Sigmoid colon (tissue), 7 donors: ENCODE measurements at regions of chr2 and their contacts with region 1.

Region 1: DNA sequence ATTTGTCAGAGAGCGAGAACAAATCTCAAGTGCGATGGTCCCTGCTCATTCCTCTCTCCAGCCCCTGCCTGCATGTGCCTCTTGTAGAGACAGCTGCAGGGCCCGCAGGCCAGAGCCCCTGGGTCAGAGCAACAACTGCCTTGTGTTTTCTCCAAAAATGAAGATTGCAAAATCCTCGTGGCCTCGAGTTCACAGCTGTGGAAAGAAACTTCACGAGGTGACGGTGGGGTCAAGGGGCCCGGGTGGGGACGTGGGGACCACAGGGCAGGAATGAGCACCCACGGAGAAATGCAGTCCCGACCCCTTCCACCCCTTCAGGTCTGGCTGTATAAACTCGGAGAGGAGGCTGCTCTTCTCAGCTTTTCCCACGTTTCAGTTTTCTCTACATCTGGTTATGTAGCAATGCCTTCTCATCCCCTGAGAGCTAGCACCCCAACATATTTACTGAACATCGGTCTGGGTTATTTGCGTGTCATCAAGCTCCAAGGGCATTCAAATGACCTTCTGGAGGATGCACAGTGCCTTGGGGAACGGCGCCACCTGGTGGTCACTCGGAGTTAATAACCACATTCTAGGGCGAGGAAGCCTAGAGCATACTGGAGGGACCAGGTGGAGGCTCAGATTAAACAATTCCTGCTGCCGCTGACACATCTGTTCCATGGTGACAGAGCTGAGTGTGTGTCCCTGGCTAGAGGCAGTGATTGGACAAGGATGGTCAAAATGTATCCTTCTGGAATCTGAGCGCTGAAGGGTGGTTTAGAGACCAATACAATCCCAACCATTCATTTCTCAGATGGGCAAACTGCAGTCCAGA is 91.4 kb upstream of the CYRIA start:
- DNase-seq: peak; percentile 89
- H3K4me3 ChIP-seq: no peak overlapping the region
- H3K27ac ChIP-seq: no peak overlapping the region
- H3K4me1 ChIP-seq: peaks cover 0 to 6% (median 0%) of the 10 kb centered on the region in 4 donors
- H3K27me3 ChIP-seq: no peaks in the 10 kb centered on the region
- CTCF ChIP-seq: peak; percentile 86 to 93 (median 88)
- EP300 ChIP-seq: no peak
- POLR2A ChIP-seq: no peak

Region 2: DNA sequence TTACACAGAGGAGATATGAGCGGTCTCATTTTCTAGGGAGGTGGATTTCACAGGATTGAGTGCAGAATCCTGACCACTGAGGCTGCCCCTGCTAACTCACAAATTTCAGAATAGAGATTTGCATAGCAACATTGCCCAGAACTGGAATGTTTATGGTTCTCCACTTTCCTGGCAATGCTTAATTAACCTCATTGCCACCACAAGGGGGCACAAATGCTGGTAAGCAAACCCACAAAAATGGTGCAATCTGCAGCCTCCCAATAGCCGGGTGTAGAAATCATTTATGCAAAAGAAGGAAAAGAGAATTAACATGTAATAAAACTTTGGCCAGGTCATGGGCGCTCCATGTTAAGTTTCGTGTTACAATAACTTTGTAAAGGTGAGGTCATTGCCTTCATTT is 203.8 kb before region 1 on chr2:
- intact Hi-C with region 1: loop called (anchors 5 kb)
- DNase-seq: no peak
- H3K4me3 ChIP-seq: no peak overlapping the region
- H3K27ac ChIP-seq: no peak overlapping the region
- H3K4me1 ChIP-seq: no peaks in the 10 kb centered on the region
- H3K27me3 ChIP-seq: no peaks in the 10 kb centered on the region
- CTCF ChIP-seq: peak in 3 of 4 experiments; percentile 21 to 38 (median 25)
- EP300 ChIP-seq: no peak
- POLR2A ChIP-seq: no peak

Region 3: DNA sequence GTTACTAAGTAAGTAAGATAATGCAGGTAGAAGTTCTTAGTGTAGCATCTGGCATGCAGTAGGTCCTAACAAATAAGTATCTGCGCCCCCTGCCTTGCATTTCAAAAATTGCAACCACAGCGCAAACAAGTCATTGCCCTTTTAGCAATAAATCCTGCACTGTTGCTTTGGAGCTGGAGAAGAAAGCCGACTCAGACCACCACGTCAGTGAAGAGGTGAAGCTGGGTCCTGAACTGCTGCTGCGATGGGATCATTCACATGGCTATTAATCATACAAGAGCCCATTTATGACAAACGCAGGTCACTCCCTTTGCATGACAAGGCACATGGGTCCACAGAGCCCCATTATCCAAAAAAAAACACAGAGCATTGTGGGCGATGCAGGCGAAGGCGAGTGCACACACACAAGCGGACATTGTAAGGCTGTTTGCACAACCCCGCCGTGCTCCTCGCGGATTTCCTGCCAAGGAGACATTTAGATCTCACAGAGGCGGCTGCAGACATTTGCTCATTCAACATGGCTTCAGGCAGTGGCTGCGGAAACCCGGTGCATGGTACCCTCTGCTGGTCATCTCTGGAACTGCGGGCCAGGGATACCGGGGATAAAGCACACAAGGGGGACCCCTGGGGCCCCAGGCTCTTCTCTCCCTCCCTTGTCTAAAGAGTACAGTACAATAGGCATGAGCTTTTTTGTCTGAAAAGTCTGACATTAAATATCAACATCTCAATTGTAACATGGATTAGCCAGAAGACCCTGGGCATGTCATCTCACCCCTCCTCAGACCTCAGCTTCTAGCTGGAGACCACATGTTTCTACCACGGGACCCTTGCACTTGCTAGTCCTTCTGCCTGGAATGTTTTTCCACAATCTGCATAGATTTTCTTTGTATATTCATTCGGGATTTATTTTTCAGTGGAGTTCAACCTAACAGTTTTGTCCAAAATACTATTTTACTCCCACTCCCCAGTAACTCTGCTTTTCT is 148.1 kb before region 1 on chr2:
- intact Hi-C with region 1: loop called (anchors 1 kb)
- DNase-seq: peak; percentile 89
- H3K4me3 ChIP-seq: peak overlapping the region in 3 of 4 donors; percentile 35 to 39 (median 38)
- H3K27ac ChIP-seq: peak overlapping the region in 2 of 4 donors; percentile 20 to 26
- H3K4me1 ChIP-seq: peaks cover 0 to 9% (median 2%) of the 10 kb centered on the region in 4 donors
- H3K27me3 ChIP-seq: no peaks in the 10 kb centered on the region
- CTCF ChIP-seq: peak; percentile 64 to 95 (median 86)
- EP300 ChIP-seq: no peak
- POLR2A ChIP-seq: no peak

Region 4: DNA sequence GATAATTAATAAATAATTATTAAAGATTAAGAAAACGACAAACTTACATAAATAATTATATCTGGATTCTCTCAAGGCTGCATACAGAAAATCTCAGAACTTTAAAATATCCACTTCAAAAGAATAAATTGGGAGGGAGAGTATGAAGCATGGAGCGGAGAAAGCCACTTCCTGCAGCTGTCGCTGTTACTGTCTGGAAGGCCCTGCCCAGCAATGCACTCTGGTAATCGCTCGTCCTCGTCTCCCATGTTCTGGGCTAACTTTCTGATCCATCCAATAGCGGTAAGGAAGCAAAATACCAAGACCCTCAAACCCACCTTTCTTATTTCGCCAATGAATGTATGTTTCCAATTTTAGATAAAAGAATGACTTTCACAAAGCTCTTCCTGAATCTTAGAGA is 118.1 kb before region 1 on chr2:
- intact Hi-C with region 1: loop called (anchors 2 kb)
- DNase-seq: no peak
- H3K4me3 ChIP-seq: no peak overlapping the region
- H3K27ac ChIP-seq: no peak overlapping the region
- H3K4me1 ChIP-seq: peaks cover 0 to 26% (median 15%) of the 10 kb centered on the region in 4 donors
- H3K27me3 ChIP-seq: no peaks in the 10 kb centered on the region
- CTCF ChIP-seq: no peak
- EP300 ChIP-seq: no peak
- POLR2A ChIP-seq: no peak